Activated naive CD4-positive, alpha-beta T cell treated with anti-CD3 and anti-CD28 coated beads for 36 hours (primary cell): ENCODE measurements at regions of chr4 and their contacts with region 1.

Region 1: GRCh38 chr4:39353478-39354253 is 12.5 kb downstream of the RFC1 start:
- DNase-seq: peak; percentile 44
- H3K4me3 Mint-ChIP-seq: peak overlapping the region; percentile 55
- H3K27ac Mint-ChIP-seq: peak overlapping the region; percentile 95
- H3K4me1 Mint-ChIP-seq: peaks cover 83% of the 10 kb centered on the region
- H3K27me3 Mint-ChIP-seq: no peaks in the 10 kb centered on the region

Region 2: DNA sequence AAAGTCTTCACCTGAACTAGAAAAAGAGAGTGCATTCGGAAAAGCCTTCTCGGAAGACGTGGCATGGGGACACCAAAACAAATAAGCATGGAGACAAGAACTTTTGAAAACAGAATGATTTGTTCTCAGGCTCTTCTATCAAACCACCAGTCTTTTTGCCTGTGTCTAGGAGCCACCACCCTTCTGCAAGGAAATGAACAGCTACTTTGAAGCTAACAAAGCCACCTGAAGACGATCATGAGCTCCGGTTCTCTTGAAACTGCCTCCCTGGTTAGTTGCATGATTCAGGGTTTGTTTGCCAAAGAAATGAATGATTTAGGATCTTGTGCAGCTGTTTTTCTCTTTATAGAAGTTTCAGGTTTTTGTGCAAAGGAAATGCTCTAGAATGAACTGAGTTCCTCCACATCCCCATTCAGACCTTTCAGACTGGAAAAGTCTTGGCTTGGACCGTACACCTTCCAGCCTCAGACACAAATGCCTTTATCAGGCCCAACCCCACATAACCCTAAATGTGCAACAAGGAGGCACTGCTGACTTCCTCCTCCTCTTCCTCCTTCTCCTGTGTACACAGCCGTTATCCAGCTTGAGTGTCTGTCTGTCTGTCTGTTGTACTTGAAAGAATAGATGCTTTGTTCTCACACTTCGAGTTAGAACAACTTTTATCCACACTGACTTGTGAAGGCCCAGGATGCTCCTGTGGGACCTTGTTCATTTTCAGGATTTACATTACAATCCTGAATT is 1024.5 kb before region 1 on chr4:
- CTCF ChIA-PET with region 1: no interaction called
- intact Hi-C with region 1: loop called (anchors 5 kb)
- DNase-seq: peak; percentile 13
- H3K4me3 Mint-ChIP-seq: no peak overlapping the region
- H3K27ac Mint-ChIP-seq: no peak overlapping the region
- H3K4me1 Mint-ChIP-seq: peaks cover 74% of the 10 kb centered on the region
- H3K27me3 Mint-ChIP-seq: no peaks in the 10 kb centered on the region

Region 3: DNA sequence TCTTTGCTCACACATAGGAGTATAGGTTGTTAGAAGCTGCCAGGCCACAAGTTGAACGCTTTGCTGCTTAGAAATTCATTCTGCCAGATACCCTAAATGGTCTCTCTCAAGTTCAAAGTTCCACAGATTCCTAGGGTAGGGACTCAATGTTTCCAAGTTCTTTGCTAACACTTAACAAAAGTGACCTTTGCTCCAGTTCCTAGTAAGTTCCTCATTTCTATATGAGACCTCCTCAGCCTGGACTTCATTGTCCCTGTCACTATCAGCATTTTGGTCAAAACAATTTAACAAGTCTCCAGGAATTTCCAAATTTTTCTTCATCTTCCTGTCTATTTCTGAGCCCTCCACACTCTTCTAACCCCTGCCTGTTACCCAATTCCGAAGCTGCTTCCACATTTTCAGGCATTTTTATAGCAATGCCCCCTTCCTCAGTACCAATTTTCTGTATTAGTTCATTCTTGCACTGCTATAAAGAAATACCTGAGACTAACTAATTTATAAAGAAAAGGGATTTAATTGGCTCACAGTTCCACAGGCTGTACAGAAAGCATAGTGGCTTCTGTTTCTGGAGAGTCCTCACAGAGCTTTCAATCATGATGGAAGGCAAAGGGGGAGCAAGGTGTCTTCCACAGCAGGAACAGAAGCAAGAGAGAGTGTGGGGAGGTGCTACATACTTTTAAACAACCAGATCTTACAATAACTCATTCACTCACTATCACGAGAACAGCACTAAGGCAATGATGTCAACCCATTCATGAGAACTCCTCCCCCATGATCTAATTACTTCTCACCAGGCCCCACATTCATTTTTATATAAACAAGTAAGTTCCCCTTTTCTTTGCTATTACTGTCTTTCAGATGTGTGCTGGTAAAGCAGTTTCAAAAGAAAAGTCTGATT is 537.5 kb before region 1 on chr4:
- CTCF ChIA-PET with region 1: no interaction called
- intact Hi-C with region 1: loop called (anchors 1 kb)
- DNase-seq: no peak
- H3K4me3 Mint-ChIP-seq: no peak overlapping the region
- H3K27ac Mint-ChIP-seq: peak overlapping the region; percentile 29
- H3K4me1 Mint-ChIP-seq: peaks cover 25% of the 10 kb centered on the region
- H3K27me3 Mint-ChIP-seq: no peaks in the 10 kb centered on the region

Region 4: DNA sequence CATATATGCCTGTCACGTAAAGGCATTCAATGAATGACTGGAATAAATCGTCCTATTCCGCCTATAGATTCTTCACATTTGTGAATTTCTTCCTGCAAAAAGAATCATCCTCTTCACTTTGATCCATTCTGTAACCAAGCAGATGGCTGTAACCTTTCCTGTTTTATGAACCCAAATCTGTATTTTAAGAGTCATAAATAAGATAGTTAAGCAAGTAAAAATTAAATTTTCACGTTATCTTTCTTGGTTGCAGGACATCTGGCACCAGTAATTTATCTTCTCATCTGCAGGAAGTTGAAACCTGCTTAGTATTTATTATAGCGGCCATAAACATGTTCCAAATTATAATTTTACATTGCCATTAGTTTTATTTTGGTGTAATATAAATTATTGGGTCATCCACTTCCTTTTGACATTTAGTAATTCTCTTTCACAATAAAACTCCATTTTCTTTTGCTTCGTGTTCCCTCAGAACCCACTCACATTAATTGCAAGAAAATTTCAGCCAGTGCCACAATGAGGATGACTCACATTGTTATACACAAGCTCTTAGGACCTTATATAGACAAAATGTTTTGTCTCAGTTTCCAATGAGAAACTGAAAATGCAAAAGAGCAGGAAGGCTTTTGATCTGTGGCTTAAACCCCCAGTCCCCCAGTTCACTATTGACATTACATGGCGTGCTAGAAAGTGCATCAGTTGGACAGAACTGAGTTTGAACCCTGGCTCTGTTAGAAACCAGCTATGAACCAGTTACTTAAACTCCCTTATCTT is 372.6 kb before region 1 on chr4:
- CTCF ChIA-PET with region 1: no interaction called
- intact Hi-C with region 1: loop called (anchors 2 kb)
- DNase-seq: peak; percentile 51
- H3K4me3 Mint-ChIP-seq: no peak overlapping the region
- H3K27ac Mint-ChIP-seq: peak overlapping the region; percentile 87
- H3K4me1 Mint-ChIP-seq: peaks cover 62% of the 10 kb centered on the region
- H3K27me3 Mint-ChIP-seq: no peaks in the 10 kb centered on the region

Region 5: GRCh38 chr4:39365830-39366771 is 12.4 kb after region 1 on chr4 and contains the start of gene RFC1:
- CTCF ChIA-PET with region 1: interaction called, 17 read pairs
- intact Hi-C with region 1: loop called (anchors 1 kb)
- DNase-seq: peak; percentile 97
- H3K4me3 Mint-ChIP-seq: peak within 1 kb of the TSS; percentile 93
- H3K27ac Mint-ChIP-seq: peak within 1 kb of the TSS; percentile 91
- H3K4me1 Mint-ChIP-seq: peaks cover 32% of the 10 kb centered on the region
- H3K27me3 Mint-ChIP-seq: no peaks in the 10 kb centered on the region
- total RNA-seq, gene RFC1: 109 to 123 TPM

Region 6: DNA sequence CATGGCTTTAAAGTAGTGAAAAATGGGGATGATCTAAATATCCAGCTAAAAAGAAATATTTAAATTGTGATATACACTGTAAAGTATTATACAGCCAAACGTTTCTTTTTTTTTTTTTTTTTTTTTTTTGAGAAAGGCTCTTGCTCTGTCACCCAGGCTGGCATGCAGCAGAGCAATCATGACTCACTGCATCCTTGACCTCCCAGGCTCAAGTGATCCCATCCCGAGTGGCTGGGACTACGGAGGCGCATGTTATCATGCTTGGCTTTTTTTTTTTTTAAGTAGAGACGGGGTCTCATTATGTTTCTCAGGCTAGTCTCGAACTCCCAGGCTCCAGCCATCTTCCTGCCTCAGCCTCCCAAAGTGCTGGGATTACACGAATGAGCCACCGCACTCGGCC is 267.9 kb after region 1 on chr4:
- CTCF ChIA-PET with region 1: no interaction called
- intact Hi-C with region 1: loop called (anchors 5 kb)
- DNase-seq: no peak
- H3K4me3 Mint-ChIP-seq: no peak overlapping the region
- H3K27ac Mint-ChIP-seq: no peak overlapping the region
- H3K4me1 Mint-ChIP-seq: peaks cover 10% of the 10 kb centered on the region
- H3K27me3 Mint-ChIP-seq: no peaks in the 10 kb centered on the region

Region 7: DNA sequence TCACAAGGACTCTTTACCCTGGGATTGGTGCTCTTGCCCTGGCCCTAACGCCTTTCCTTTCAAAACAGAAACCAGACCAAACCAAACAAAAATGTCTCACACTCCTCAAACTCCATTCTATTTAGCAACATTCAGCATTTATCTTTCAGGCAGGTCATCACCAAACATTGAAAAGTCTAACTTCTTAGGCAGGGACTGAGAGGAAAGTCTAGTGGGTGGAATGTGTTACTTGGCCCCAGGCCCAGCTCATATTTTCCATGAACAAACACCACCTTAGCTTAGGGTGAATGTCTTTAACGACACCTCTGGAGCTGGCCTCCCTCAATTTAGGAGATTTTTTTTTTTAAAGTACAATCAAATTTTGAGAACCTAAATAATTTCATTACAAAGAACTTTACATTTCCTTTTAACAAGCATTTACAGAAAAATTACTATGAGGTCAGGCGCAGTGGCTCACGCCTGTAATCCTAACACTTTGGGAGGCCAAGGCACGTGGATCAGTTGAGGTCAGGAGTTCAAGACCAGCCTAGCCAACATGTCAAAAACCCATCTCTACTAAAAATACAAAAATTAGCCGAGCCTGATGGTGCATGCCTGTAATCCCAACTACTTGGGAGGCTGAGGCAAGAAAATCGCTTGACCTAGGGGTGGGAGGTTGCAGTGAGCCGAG is 692.8 kb after region 1 on chr4:
- CTCF ChIA-PET with region 1: no interaction called
- intact Hi-C with region 1: no loop called
- DNase-seq: peak; percentile 60
- H3K4me3 Mint-ChIP-seq: no peak overlapping the region
- H3K27ac Mint-ChIP-seq: peak overlapping the region; percentile 60
- H3K4me1 Mint-ChIP-seq: peaks cover 9% of the 10 kb centered on the region
- H3K27me3 Mint-ChIP-seq: no peaks in the 10 kb centered on the region

Region 8: GRCh38 chr4:40056716-40057585 is 703.3 kb after region 1 on chr4 and contains the start of gene N4BP2:
- CTCF ChIA-PET with region 1: no interaction called
- intact Hi-C with region 1: loop called (anchors 5 kb)
- DNase-seq: peak; percentile 71
- H3K4me3 Mint-ChIP-seq: peak within 1 kb of the TSS; percentile 93
- H3K27ac Mint-ChIP-seq: peak within 1 kb of the TSS; percentile 95
- H3K4me1 Mint-ChIP-seq: peaks cover 30% of the 10 kb centered on the region
- H3K27me3 Mint-ChIP-seq: no peaks in the 10 kb centered on the region
- total RNA-seq, gene N4BP2: 17.5 to 18.8 TPM